WTC11 (cell line): ENCODE measurements at regions of chr16 and their contacts with region 1.

Region 1: GRCh38 chr16:75464130-75464918 is at the start of gene TMEM170A:
- DNase-seq: peak; percentile 100
- ATAC-seq: peak; percentile 97
- H3K4me3 Mint-ChIP-seq: peak within 1 kb of the TSS; percentile 89
- H3K27ac Mint-ChIP-seq: peak within 1 kb of the TSS; percentile 84
- H3K4me1 Mint-ChIP-seq: peaks cover 34% of the 10 kb centered on the region
- H3K27me3 Mint-ChIP-seq: no peaks in the 10 kb centered on the region
- CTCF ChIP-seq: peak; percentile 100
- total RNA-seq, gene TMEM170A: 45.6 to 53.4 TPM (median 52.0 TPM) in 3 replicates

Region 2: GRCh38 chr16:75420987-75421819 is 43.1 kb before region 1 on chr16:
- CTCF ChIA-PET with region 1: interaction called, 10 read pairs
- POLR2A ChIA-PET with region 1: no interaction called
- DNase-seq: peak; percentile 86
- ATAC-seq: peak; percentile 99
- H3K4me3 Mint-ChIP-seq: peak overlapping the region; percentile 55
- H3K27ac Mint-ChIP-seq: peak overlapping the region; percentile 95
- H3K4me1 Mint-ChIP-seq: peaks cover 56% of the 10 kb centered on the region
- H3K27me3 Mint-ChIP-seq: no peaks in the 10 kb centered on the region
- CTCF ChIP-seq: no peak

Region 3: DNA sequence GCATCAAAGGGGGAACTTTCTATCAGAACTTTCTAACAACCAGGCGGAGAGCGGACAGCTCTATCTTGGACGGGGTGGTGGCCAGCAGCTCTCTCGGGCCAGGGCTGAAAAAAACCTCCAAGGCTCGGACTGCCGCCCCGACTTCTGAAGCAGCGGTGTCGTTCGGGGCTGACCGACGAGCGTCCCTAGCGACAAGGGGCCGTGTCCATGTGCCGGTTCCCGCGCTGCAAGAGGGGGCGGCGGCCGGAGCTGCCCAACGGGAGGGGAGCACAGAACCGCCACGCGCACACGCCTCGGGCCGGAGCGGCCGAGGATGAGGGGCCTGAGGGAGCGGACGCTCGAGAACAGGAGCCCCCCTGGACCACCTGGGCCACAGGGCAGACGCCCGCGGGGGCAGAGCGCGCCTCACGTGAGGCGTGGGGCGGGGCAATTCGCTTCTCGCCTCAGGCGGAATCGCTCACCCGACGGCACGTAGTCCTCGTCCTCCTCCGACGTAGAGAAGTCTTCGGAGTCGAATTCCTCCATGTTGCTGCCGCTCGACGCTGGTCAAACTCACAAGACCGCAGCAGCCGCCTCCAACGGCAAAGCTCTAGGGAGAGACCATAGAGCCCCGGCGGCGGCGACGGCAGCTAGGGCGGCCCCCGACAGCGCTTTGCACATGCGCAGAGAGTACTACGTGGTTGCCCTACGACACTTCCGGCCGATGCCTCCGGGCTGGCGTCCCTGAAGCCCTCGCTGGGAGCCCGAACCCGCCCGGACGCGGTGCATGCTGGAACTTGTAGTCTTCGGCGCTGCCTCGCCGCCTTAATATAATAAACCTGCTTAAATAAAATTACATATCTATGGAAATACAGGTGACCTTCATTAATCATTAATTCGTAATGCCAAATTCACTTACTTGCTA is 31.2 kb before region 1 on chr16 and contains the start of gene CFDP1:
- CTCF ChIA-PET with region 1: interaction called, 17 read pairs
- POLR2A ChIA-PET with region 1: interaction called, 4 read pairs
- DNase-seq: peak; percentile 97
- ATAC-seq: peak; percentile 87
- H3K4me3 Mint-ChIP-seq: peak within 1 kb of the TSS; percentile 79
- H3K27ac Mint-ChIP-seq: peak within 1 kb of the TSS; percentile 97
- H3K4me1 Mint-ChIP-seq: peaks cover 22% of the 10 kb centered on the region
- H3K27me3 Mint-ChIP-seq: peaks cover 8% of the 10 kb centered on the region
- CTCF ChIP-seq: no peak
- total RNA-seq, gene CFDP1: 79.2 to 102 TPM (median 98.0 TPM) in 3 replicates

Region 4: GRCh38 chr16:75445298-75445697 is 19.0 kb before region 1 on chr16:
- CTCF ChIA-PET with region 1: interaction called, 15 read pairs
- POLR2A ChIA-PET with region 1: no interaction called
- DNase-seq: no peak
- ATAC-seq: peak; percentile 48; the same call in 1 of the 2 replicates
- H3K4me3 Mint-ChIP-seq: no peak overlapping the region
- H3K27ac Mint-ChIP-seq: no peak overlapping the region
- H3K4me1 Mint-ChIP-seq: peaks cover 9% of the 10 kb centered on the region
- H3K27me3 Mint-ChIP-seq: no peaks in the 10 kb centered on the region
- CTCF ChIP-seq: no peak

Region 5: GRCh38 chr16:75495076-75495674 is 30.9 kb after region 1 on chr16 and contains the start of gene CHST6:
- CTCF ChIA-PET with region 1: interaction called, 23 read pairs
- POLR2A ChIA-PET with region 1: no interaction called
- DNase-seq: peak; percentile 82
- ATAC-seq: peak; percentile 85
- H3K4me3 Mint-ChIP-seq: peak within 1 kb of the TSS; percentile 93
- H3K27ac Mint-ChIP-seq: 0 out of 2 replicates have a peak within 1 kb of the TSS, but pooled peaks have one; percentile 76
- H3K4me1 Mint-ChIP-seq: peaks cover 19% of the 10 kb centered on the region
- H3K27me3 Mint-ChIP-seq: peaks cover 13% of the 10 kb centered on the region
- CTCF ChIP-seq: no peak
- total RNA-seq, gene CHST6: 20.2 to 23.2 TPM (median 23.1 TPM) in 3 replicates

Region 6: DNA sequence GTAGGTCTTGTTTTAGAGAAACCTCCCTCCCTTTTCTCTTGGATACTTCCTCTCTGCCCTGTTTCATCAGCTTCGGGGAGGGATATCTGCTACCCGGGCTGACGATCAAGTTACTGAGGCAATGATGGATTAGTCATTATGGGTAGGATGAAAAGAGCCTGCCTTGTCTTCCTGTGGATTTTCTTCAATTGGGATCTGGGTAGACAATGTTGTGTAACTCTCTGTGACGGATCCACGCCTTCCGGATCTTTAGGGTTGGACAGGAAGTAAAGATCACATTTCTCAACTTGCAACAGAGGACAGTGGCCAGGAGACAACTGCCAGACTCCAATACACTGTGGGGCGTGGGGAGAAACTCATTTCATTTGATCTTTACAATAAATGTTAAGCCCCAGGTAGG is 42.2 kb after region 1 on chr16:
- CTCF ChIA-PET with region 1: no interaction called
- POLR2A ChIA-PET with region 1: no interaction called
- DNase-seq: no peak
- ATAC-seq: no peak
- H3K4me3 Mint-ChIP-seq: no peak overlapping the region
- H3K27ac Mint-ChIP-seq: no peak overlapping the region
- H3K4me1 Mint-ChIP-seq: no peaks in the 10 kb centered on the region
- H3K27me3 Mint-ChIP-seq: no peaks in the 10 kb centered on the region; the same call in 1 of the 2 replicates
- CTCF ChIP-seq: no peak